Tibial artery (tissue), 4 donors: ENCODE measurements at regions of chr11 and their contacts with region 1.

Region 1: DNA sequence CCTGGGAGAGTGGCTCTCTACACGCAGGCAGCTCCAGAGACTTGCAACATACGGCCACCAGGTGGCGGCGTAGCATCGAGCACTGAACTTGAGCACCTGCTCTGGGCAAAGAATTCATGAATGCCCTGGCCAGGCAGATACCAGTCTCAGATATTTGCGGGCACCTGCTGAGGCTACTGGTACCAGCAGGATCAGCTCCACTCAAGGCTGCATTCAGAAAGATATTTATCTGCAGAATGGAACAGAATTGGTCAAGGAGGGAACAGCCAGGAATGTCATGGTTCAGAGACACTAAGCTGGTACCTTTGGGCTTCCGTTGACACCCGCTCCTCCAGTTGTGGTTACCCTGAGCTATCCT is 10.8 kb upstream of the CCDC86 start:
- DNase-seq: peak; percentile 82 to 88
- H3K4me3 ChIP-seq: no peak overlapping the region
- H3K27ac ChIP-seq: no peak overlapping the region
- H3K4me1 ChIP-seq: no peaks in the 10 kb centered on the region
- H3K27me3 ChIP-seq: peaks cover 0 to 7% of the 10 kb centered on the region in 2 donors
- CTCF ChIP-seq: peak; percentile 86 to 93

Region 2: DNA sequence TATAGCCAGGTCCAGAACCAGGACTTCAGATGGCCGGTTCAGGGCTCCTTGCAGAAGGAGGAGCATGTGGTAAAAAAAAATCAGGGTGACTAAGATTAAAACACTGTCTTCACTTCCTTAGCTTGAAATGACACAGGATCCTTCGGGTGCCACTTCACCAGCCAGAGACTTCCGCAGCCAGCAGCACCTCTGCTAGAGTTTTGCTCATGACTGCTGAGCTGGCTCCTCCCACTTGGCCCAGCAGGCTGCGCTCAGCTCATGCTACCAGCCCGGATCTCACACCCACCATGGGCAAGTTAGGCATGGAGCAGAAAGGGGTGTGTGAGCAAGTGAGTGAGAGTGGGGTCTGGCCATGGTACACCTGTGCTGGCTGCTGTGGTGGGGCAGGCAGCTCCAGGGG is 113.2 kb before region 1 on chr11:
- intact Hi-C with region 1: no loop called
- DNase-seq: no peak
- H3K4me3 ChIP-seq: no peak overlapping the region
- H3K27ac ChIP-seq: no peak overlapping the region
- H3K4me1 ChIP-seq: no peaks in the 10 kb centered on the region
- H3K27me3 ChIP-seq: peaks cover 0 to 9% of the 10 kb centered on the region in 2 donors
- CTCF ChIP-seq: no peak

Region 3: DNA sequence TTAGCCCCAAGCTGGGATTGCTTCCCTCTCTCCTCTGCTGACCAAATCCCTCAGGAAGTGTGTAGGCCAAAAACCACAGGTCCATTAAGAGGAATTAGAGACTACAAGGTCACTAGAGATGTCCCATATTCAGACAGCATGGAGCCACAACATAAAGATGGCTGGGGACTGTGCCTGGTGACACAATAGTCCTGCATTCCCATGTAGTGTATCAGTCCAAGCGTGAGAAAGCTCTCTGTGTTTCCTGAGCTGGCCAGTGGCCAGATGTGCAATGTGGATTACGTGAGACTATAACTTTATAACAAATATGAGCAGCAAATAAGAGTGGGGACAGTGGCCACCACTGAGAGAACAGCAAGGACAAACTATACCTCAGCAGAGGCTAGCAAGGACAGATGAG is 53.5 kb before region 1 on chr11:
- intact Hi-C with region 1: no loop called
- DNase-seq: no peak
- H3K4me3 ChIP-seq: no peak overlapping the region
- H3K27ac ChIP-seq: no peak overlapping the region
- H3K4me1 ChIP-seq: peaks cover 0 to 11% (median 6%) of the 10 kb centered on the region in 4 donors
- H3K27me3 ChIP-seq: peaks cover 0 to 4% of the 10 kb centered on the region in 2 donors
- CTCF ChIP-seq: no peak

Region 4: DNA sequence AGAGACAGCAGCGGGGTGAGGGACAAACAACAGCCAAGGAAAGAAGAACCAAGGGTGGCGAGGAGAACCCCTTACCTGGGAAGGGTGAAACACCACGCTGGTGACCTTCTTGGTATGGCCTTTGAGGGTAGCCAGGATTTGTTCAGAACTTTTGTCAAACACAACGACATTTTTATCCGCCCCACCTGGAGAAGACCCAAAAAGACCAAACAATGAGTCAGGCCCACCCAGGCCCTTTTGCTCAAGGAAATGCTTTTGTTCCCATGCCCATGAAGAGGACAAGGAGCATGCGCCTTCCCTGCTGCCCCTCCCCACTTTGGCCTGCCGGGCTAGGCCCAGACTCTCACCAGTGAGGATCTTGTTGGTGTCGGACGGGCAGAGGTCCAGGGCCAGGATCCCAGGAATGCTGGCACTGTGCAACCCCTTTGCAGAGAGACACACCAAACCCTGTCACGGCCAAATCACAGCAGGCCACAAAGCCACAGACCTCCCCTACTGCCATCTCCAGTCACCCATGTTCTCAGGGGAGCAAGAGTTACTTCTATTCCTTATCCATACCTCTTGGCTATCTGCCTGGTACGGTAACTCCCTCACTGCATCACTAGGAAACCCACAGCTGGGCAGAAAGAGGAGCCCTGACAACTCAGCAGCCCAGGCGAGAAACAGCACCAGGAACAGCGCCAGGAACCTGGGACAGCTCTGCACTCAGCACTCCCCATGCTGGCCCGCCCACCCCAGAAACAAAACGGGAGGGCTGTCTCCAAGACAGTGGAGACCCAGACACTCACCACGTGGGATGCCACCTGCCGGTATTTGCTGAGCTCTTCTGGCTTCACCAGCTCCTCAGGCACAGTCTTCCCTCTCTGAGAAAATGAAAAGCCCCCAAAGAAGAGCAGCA is 69.6 kb after region 1 on chr11:
- intact Hi-C with region 1: loop called (anchors 2 kb)
- DNase-seq: no peak
- H3K4me3 ChIP-seq: no peak overlapping the region
- H3K27ac ChIP-seq: no peak overlapping the region
- H3K4me1 ChIP-seq: peaks cover 0 to 22% (median 16%) of the 10 kb centered on the region in 4 donors
- H3K27me3 ChIP-seq: no peaks in the 10 kb centered on the region
- CTCF ChIP-seq: no peak

Region 5: GRCh38 chr11:61187505-61188130 is 356.5 kb after region 1 on chr11:
- intact Hi-C with region 1: loop called (anchors 5 kb)
- DNase-seq: peak; percentile 76 to 79
- H3K4me3 ChIP-seq: no peak overlapping the region
- H3K27ac ChIP-seq: no peak overlapping the region
- H3K4me1 ChIP-seq: no peaks in the 10 kb centered on the region
- H3K27me3 ChIP-seq: peaks cover 0 to 21% of the 10 kb centered on the region in 2 donors
- CTCF ChIP-seq: peak; percentile 85 to 87